ENCODE measurements at regions of chr4 and their contacts with region 1.

Region 1: GRCh38 chr4:87838890-87839591 is 6.3 kb downstream of the MEPE start:
- DNase-seq: peak; percentile 35
- H3K27ac ChIP-seq: no peak overlapping the region
- CTCF ChIP-seq: peak; percentile 80

Region 2: DNA sequence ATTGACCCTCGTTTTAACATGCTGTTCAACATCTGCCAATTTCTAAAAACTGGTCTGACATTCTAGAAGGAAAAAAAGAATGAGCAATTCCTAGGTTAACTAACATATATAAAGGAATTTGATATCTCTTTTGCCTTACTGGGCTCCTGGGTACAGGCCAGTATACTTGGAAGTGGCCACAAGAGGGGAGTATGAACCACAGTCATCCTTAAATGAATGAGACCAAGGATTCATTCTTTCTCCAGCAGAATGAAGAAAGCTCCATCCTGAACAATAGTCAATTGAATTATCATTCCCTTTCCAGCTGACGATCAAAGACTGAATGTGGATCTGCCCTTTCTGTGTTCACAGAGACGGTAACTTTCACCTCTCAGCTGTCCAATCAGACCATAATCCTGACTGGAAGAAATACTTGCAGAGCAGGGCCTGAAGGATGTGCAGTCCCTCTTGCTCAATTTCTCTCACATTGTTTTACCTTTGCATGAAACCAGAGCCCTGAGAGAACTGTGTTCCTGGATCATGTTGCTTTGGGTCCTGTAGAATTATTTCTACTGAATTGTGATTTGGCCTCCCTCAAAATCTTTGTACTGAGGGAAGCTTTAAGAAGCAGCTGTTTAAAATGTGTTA is 295.1 kb before region 1 on chr4:
- CTCF ChIA-PET with region 1: interaction called, 16 read pairs
- POLR2A ChIA-PET with region 1: no interaction called
- DNase-seq: peak; percentile 65
- H3K27ac ChIP-seq: no peak overlapping the region
- CTCF ChIP-seq: peak; percentile 62

Region 3: DNA sequence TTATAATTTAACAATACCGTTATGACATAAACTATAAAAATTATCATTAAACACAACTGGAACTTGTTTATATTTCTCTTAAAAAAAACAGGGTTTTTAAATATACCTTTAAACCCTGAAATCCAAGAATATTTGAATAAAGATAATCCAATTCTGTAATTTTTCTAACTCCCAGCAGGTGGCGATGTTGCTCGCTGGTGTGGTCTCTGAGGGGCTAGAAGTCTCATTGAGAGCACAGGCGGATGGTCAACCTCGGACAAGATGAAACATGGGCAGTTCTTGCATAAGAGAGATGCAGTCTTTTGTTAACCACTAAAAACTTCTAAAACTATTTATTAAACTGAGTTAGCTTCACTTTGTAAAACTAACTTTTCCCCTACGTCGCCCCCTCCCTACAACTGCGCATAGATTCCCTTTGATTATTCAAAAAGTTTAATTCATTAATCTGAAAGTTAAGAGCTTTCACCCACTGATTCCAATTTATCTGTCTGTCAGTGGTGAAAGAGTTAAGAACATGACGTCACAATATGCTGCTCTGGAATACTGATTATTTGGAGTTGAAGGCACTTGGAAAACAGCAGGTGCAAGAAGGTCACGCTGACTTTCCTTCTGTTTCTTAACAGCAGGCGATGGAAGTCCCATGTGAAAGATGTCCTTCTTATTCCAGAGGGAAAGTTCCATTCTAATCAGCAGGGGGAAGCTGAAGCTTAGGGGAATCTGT is 159.4 kb before region 1 on chr4:
- CTCF ChIA-PET with region 1: interaction called, 11 read pairs
- POLR2A ChIA-PET with region 1: no interaction called
- DNase-seq: peak; percentile 31
- H3K27ac ChIP-seq: no peak overlapping the region
- CTCF ChIP-seq: peak; percentile 78